Tibial artery (tissue), 4 donors: ENCODE measurements at regions of chr6 and their contacts with region 1.

Region 1: DNA sequence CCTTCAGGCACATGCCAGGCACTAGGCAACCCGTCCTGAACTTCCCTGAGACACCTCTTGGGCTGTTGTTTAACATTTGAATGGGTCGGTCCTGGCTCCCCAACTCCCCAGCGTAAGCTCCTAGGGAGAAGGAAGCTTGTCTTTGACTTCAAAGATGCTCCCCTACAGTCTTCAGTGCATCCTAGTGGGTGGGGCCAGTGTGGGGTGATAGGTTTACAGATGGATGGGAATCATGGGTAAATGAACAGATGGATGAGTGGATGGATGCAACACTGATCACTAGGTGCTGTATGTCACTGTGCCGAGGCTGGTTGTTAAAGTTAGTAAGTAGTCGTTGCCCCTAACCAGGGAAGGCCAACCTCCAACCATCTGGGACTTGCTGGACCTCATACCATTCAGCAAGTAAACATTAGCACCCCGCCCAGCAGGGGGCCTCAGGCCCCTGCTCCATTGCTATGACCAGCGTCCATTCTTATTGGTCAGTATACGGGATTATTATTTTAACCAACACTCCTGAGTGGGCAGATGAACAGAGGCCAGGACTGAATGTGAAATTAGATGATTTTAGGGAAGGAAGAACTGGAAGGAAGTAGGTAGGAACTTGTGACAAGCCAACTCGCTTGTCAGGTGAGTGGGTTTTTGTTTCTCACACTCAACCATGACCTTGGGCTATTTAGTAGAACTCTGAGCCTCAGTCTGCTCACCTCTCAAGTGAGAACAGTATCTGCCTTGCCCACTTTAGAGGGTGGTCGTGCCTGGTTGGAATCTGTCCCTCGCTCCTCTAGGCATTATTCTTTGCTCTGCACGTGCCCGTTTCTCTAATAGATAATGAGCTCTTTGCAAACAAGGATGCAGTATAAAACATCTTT is 82.9 kb upstream of the FOXP4 start:
- DNase-seq: peak; percentile 77 to 84
- H3K4me3 ChIP-seq: no peak overlapping the region
- H3K27ac ChIP-seq: no peak overlapping the region
- H3K4me1 ChIP-seq: no peaks in the 10 kb centered on the region
- H3K27me3 ChIP-seq: peaks cover 0 to 3% of the 10 kb centered on the region in 2 donors
- CTCF ChIP-seq: peak; percentile 64 to 71

Region 2: GRCh38 chr6:41334482-41335040 is 128.7 kb before region 1 on chr6:
- intact Hi-C with region 1: no loop called
- DNase-seq: no peak
- H3K4me3 ChIP-seq: no peak overlapping the region
- H3K27ac ChIP-seq: no peak overlapping the region
- H3K4me1 ChIP-seq: no peaks in the 10 kb centered on the region
- H3K27me3 ChIP-seq: peaks cover 0 to 35% of the 10 kb centered on the region in 2 donors
- CTCF ChIP-seq: no peak

Region 3: GRCh38 chr6:41442800-41443501 is 20.3 kb before region 1 on chr6:
- intact Hi-C with region 1: no loop called
- DNase-seq: peak; percentile 64 to 82
- H3K4me3 ChIP-seq: peak overlapping the region; percentile 16 to 23
- H3K27ac ChIP-seq: peak overlapping the region; percentile 1 to 59
- H3K4me1 ChIP-seq: peaks cover 0 to 21% (median 18%) of the 10 kb centered on the region in 4 donors
- H3K27me3 ChIP-seq: peaks cover 0 to 3% of the 10 kb centered on the region in 2 donors
- CTCF ChIP-seq: peak; percentile 15 to 28

Region 4: GRCh38 chr6:41545703-41546474 is 82.6 kb after region 1 on chr6 and contains the start of gene FOXP4:
- intact Hi-C with region 1: loop called (anchors 10 kb)
- DNase-seq: peak; percentile 94 to 96
- H3K4me3 ChIP-seq: peak within 1 kb of the TSS; percentile 97 to 98
- H3K27ac ChIP-seq: peak within 1 kb of the TSS; percentile 88 to 90
- H3K4me1 ChIP-seq: peaks cover 7 to 46% (median 34%) of the 10 kb centered on the region in 4 donors
- H3K27me3 ChIP-seq: no peaks in the 10 kb centered on the region
- CTCF ChIP-seq: no peak

Region 5: GRCh38 chr6:42086046-42087035 is 623.0 kb after region 1 on chr6:
- intact Hi-C with region 1: no loop called
- DNase-seq: no peak
- H3K4me3 ChIP-seq: no peak overlapping the region
- H3K27ac ChIP-seq: no peak overlapping the region
- H3K4me1 ChIP-seq: peaks cover 0 to 6% (median 0%) of the 10 kb centered on the region in 4 donors
- H3K27me3 ChIP-seq: no peaks in the 10 kb centered on the region
- CTCF ChIP-seq: no peak